CD8-positive, alpha-beta T cell (primary cell): ENCODE measurements at regions of chr2 and their contacts with region 1.

Region 1: DNA sequence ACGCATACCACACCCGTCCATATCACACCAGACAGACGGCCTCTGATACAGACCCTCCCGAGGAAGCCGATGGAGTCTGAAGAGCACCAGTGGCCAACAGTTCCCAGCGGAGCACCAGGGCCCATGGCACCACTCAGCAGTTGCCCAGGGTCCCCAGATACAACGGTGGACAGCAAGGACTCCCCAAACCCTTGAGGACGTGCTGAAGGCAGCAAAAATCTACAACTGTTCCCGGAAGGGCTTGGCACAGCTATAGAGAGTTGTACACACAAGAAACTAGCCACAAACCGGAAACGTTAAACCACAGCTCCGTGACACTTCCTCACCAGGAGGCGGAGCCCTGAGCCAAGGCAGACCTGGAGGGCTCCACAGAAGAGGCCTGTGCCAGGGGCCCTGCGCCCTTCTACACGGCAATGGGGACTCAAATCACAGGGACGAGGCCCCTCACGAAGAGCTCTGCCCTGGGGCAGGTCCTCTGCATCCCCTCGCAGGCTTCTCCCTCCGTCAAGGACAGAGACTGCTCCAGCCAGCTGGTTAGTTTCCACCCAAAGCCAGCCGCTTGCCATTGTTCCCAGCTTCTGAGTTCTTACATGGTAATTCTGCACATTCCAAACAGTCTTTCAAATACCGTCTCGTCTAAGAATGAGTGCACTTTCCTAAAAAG is 133.4 kb downstream of the HDAC4 start:
- DNase-seq: peak; percentile 73 to 98 (median 93)
- ATAC-seq: peak; percentile 70
- H3K4me3 ChIP-seq: peak overlapping the region; percentile 62 to 66
- H3K4me3 Mint-ChIP-seq: peak overlapping the region; percentile 90
- H3K27ac ChIP-seq: peak overlapping the region; percentile 75 to 86
- H3K27ac Mint-ChIP-seq: peak overlapping the region; percentile 95
- H3K4me1 ChIP-seq: peaks cover 66% of the 10 kb centered on the region
- H3K4me1 Mint-ChIP-seq: peaks cover 71% of the 10 kb centered on the region
- H3K27me3 ChIP-seq: no peaks in the 10 kb centered on the region
- H3K27me3 Mint-ChIP-seq: no peaks in the 10 kb centered on the region
- CTCF ChIP-seq: peak; percentile 64

Region 2: GRCh38 chr2:238644095-238645081 is 623.0 kb before region 1 on chr2:
- CTCF ChIA-PET with region 1: no interaction called
- POLR2A ChIA-PET with region 1: no interaction called
- intact Hi-C with region 1: no loop called
- DNase-seq: no peak
- ATAC-seq: no peak
- H3K4me3 ChIP-seq: no peak overlapping the region
- H3K4me3 Mint-ChIP-seq: no peak overlapping the region
- H3K27ac ChIP-seq: no peak overlapping the region
- H3K27ac Mint-ChIP-seq: no peak overlapping the region
- H3K4me1 ChIP-seq: no peaks in the 10 kb centered on the region
- H3K4me1 Mint-ChIP-seq: no peaks in the 10 kb centered on the region
- H3K27me3 ChIP-seq: no peaks in the 10 kb centered on the region
- H3K27me3 Mint-ChIP-seq: no peaks in the 10 kb centered on the region
- CTCF ChIP-seq: no peak

Region 3: DNA sequence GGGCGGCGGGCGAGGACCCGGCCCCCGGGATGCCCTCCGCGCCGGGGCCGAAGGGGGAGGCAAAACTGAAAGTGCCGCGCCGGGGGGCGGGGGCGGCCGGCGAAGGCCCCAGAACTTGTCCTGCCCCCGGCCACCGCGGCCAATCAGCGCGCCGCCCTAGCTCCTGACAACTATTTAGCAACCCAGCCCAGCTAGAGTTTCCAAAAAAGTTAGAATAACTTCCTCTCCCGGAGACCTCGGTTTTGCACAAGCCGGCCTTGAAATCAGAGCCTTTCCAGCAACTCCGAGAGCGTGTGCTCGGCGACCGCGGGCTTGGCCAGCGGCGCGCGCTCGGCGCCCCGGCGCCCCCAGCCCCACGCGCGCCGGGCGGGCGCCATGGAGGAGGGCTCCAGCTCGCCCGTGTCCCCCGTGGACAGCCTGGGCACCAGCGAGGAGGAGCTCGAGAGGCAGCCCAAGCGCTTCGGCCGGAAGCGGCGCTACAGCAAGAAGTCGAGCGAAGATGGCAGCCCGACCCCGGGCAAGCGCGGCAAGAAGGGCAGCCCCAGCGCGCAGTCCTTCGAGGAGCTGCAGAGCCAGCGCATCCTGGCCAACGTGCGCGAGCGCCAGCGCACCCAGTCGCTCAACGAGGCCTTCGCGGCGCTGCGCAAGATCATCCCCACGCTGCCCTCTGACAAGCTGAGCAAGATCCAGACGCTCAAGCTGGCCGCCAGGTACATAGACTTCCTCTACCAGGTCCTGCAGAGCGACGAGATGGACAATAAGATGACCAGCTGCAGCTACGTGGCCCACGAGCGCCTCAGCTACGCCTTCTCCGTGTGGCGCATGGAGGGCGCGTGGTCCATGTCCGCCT is 419.4 kb before region 1 on chr2 and contains the start of gene TWIST2:
- CTCF ChIA-PET with region 1: no interaction called
- POLR2A ChIA-PET with region 1: no interaction called
- intact Hi-C with region 1: no loop called
- DNase-seq: no peak
- ATAC-seq: no peak
- H3K4me3 ChIP-seq: peak within 1 kb of the TSS in 1 of 2 experiments; percentile 11
- H3K4me3 Mint-ChIP-seq: no peak within 1 kb of the TSS
- H3K27ac ChIP-seq: no peak within 1 kb of the TSS
- H3K27ac Mint-ChIP-seq: no peak within 1 kb of the TSS
- H3K4me1 ChIP-seq: peaks cover 3% of the 10 kb centered on the region
- H3K4me1 Mint-ChIP-seq: no peaks in the 10 kb centered on the region
- H3K27me3 ChIP-seq: peaks cover 2 to 6% of the 10 kb centered on the region in 2 experiments
- H3K27me3 Mint-ChIP-seq: peaks cover 44% of the 10 kb centered on the region
- CTCF ChIP-seq: no peak
- total RNA-seq, gene TWIST2: not detected

Region 4: GRCh38 chr2:238945433-238946150 is 321.8 kb before region 1 on chr2:
- CTCF ChIA-PET with region 1: no interaction called
- POLR2A ChIA-PET with region 1: no interaction called
- intact Hi-C with region 1: no loop called
- DNase-seq: no peak
- ATAC-seq: no peak
- H3K4me3 ChIP-seq: no peak overlapping the region
- H3K4me3 Mint-ChIP-seq: no peak overlapping the region
- H3K27ac ChIP-seq: no peak overlapping the region
- H3K27ac Mint-ChIP-seq: no peak overlapping the region
- H3K4me1 ChIP-seq: no peaks in the 10 kb centered on the region
- H3K4me1 Mint-ChIP-seq: peaks cover 12% of the 10 kb centered on the region
- H3K27me3 ChIP-seq: no peaks in the 10 kb centered on the region
- H3K27me3 Mint-ChIP-seq: peaks cover 5% of the 10 kb centered on the region
- CTCF ChIP-seq: no peak

Region 5: GRCh38 chr2:239143858-239144718 is 123.3 kb before region 1 on chr2:
- CTCF ChIA-PET with region 1: interaction called, 16 read pairs
- POLR2A ChIA-PET with region 1: interaction called, 4 read pairs
- intact Hi-C with region 1: loop called (anchors 2 kb)
- DNase-seq: peak in 7 of 9 experiments; percentile 4 to 63 (median 41)
- ATAC-seq: peak; percentile 54
- H3K4me3 ChIP-seq: no peak overlapping the region
- H3K4me3 Mint-ChIP-seq: no peak overlapping the region
- H3K27ac ChIP-seq: no peak overlapping the region
- H3K27ac Mint-ChIP-seq: no peak overlapping the region
- H3K4me1 ChIP-seq: no peaks in the 10 kb centered on the region
- H3K4me1 Mint-ChIP-seq: peaks cover 8% of the 10 kb centered on the region
- H3K27me3 ChIP-seq: no peaks in the 10 kb centered on the region
- H3K27me3 Mint-ChIP-seq: no peaks in the 10 kb centered on the region
- CTCF ChIP-seq: peak; percentile 55

Region 6: DNA sequence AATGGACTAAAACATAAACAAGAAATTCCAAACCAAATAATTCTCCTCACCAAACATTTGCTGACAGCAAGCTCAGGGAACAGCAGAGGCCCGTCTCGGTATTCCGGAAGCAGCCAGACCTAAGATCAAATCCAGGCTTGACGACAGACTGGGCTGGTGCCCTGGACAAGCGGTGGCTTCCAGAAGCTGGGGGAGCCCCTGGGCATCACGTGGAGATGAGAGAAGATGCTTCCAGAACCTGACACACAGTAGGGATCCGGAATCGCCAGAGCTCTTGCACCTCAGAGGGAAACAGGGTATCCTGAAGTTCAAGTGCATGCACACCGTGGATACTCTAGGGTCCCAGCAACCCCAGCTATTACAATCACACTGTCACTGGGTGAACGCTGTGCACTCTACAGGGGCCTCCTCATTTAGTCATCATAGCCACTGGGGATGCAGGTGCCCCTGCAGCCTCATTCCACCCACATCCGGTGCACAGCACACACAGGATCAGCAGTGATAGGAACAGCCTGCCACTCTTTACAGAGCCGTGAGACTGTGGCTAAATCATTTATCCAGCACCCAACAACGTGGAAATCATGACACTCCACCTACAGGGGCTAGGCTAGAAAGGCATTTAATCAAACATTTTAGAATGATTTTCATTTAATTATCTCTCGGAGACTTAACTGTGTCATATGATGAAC is 30.8 kb after region 1 on chr2:
- CTCF ChIA-PET with region 1: interaction called, 26 read pairs
- POLR2A ChIA-PET with region 1: interaction called, 13 read pairs
- intact Hi-C with region 1: loop called (anchors 1 kb)
- DNase-seq: peak; percentile 52 to 93 (median 76)
- ATAC-seq: peak; percentile 86
- H3K4me3 ChIP-seq: peak overlapping the region; percentile 34 to 53
- H3K4me3 Mint-ChIP-seq: peak overlapping the region; percentile 84
- H3K27ac ChIP-seq: peak overlapping the region; percentile 34 to 68
- H3K27ac Mint-ChIP-seq: peak overlapping the region; percentile 94
- H3K4me1 ChIP-seq: peaks cover 73% of the 10 kb centered on the region
- H3K4me1 Mint-ChIP-seq: peaks cover 71% of the 10 kb centered on the region
- H3K27me3 ChIP-seq: no peaks in the 10 kb centered on the region
- H3K27me3 Mint-ChIP-seq: no peaks in the 10 kb centered on the region
- CTCF ChIP-seq: peak; percentile 50

Region 7: GRCh38 chr2:239380831-239381708 is 113.7 kb after region 1 on chr2:
- CTCF ChIA-PET with region 1: interaction called, 4 read pairs
- POLR2A ChIA-PET with region 1: interaction called, 7 read pairs
- intact Hi-C with region 1: loop called (anchors 1 to 5 kb)
- DNase-seq: peak; percentile 51 to 87 (median 71)
- ATAC-seq: peak; percentile 90
- H3K4me3 ChIP-seq: peak overlapping the region; percentile 26 to 36
- H3K4me3 Mint-ChIP-seq: peak overlapping the region; percentile 86
- H3K27ac ChIP-seq: peak overlapping the region; percentile 42 to 62
- H3K27ac Mint-ChIP-seq: peak overlapping the region; percentile 96
- H3K4me1 ChIP-seq: peaks cover 17% of the 10 kb centered on the region
- H3K4me1 Mint-ChIP-seq: peaks cover 30% of the 10 kb centered on the region
- H3K27me3 ChIP-seq: no peaks in the 10 kb centered on the region
- H3K27me3 Mint-ChIP-seq: no peaks in the 10 kb centered on the region
- CTCF ChIP-seq: no peak

Region 8: DNA sequence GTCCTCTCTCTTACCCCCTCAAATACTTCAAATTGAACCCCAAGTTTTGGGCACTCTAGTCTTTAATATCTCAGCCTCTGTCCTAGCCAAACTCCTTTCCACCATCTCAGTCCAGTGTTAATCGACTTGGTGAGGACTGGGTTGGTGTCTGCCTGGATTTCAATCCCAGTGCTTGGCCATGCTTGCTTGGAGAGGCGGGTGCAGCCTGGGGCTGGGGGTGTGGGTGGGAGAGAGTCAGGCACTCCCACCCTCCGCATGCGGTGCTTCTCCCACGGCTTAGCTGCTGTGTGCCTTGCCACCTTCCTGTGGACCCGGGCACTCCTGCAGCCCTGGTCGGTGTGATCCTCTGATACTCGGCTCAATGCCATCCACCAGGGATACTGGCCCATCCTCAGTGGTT is 354.2 kb after region 1 on chr2:
- CTCF ChIA-PET with region 1: no interaction called
- POLR2A ChIA-PET with region 1: no interaction called
- intact Hi-C with region 1: loop called (anchors 5 to 10 kb)
- DNase-seq: peak in 1 of 9 experiments; percentile 25
- ATAC-seq: no peak
- H3K4me3 ChIP-seq: no peak overlapping the region
- H3K4me3 Mint-ChIP-seq: no peak overlapping the region
- H3K27ac ChIP-seq: no peak overlapping the region
- H3K27ac Mint-ChIP-seq: no peak overlapping the region
- H3K4me1 ChIP-seq: peaks cover 22% of the 10 kb centered on the region
- H3K4me1 Mint-ChIP-seq: peaks cover 33% of the 10 kb centered on the region
- H3K27me3 ChIP-seq: no peaks in the 10 kb centered on the region
- H3K27me3 Mint-ChIP-seq: no peaks in the 10 kb centered on the region
- CTCF ChIP-seq: no peak

Region 9: GRCh38 chr2:239991689-239992314 is 724.4 kb after region 1 on chr2:
- CTCF ChIA-PET with region 1: no interaction called
- POLR2A ChIA-PET with region 1: no interaction called
- intact Hi-C with region 1: loop called in 1 of 2 experiments (anchors 5 kb)
- DNase-seq: peak in 2 of 9 experiments; percentile 54 to 65
- ATAC-seq: peak; percentile 69
- H3K4me3 ChIP-seq: no peak overlapping the region
- H3K4me3 Mint-ChIP-seq: no peak overlapping the region
- H3K27ac ChIP-seq: no peak overlapping the region
- H3K27ac Mint-ChIP-seq: no peak overlapping the region
- H3K4me1 ChIP-seq: no peaks in the 10 kb centered on the region
- H3K4me1 Mint-ChIP-seq: no peaks in the 10 kb centered on the region
- H3K27me3 ChIP-seq: no peaks in the 10 kb centered on the region
- H3K27me3 Mint-ChIP-seq: no peaks in the 10 kb centered on the region
- CTCF ChIP-seq: peak; percentile 99

Region 10: GRCh38 chr2:240434728-240435456 is 1167.5 kb after region 1 on chr2:
- CTCF ChIA-PET with region 1: no interaction called
- POLR2A ChIA-PET with region 1: no interaction called
- intact Hi-C with region 1: loop called in 1 of 2 experiments (anchors 5 kb)
- DNase-seq: peak; percentile 67 to 91 (median 90)
- ATAC-seq: peak; percentile 86
- H3K4me3 ChIP-seq: peak overlapping the region; percentile 50 to 65
- H3K4me3 Mint-ChIP-seq: peak overlapping the region; percentile 85
- H3K27ac ChIP-seq: no peak overlapping the region
- H3K27ac Mint-ChIP-seq: no peak overlapping the region
- H3K4me1 ChIP-seq: peaks cover 10% of the 10 kb centered on the region
- H3K4me1 Mint-ChIP-seq: peaks cover 6% of the 10 kb centered on the region
- H3K27me3 ChIP-seq: peaks cover 15 to 17% of the 10 kb centered on the region in 2 experiments
- H3K27me3 Mint-ChIP-seq: peaks cover 18% of the 10 kb centered on the region
- CTCF ChIP-seq: no peak